Activated T-helper 1 cell treated with anti-CD3 and anti-CD28 coated beads, Interleukin-12 subunit alpha, Interleukin-12 subunit beta, Interleukin-2, Interleukin-4 antibody, amounts not matched to agents 30 ng/mL and 10 ng/mL and 1 ng/mL, durations not matched to agents 14 hours and 24 hours and 36 hours (primary cell): ENCODE measurements at regions of chr7 and their contacts with region 1.

Region 1: DNA sequence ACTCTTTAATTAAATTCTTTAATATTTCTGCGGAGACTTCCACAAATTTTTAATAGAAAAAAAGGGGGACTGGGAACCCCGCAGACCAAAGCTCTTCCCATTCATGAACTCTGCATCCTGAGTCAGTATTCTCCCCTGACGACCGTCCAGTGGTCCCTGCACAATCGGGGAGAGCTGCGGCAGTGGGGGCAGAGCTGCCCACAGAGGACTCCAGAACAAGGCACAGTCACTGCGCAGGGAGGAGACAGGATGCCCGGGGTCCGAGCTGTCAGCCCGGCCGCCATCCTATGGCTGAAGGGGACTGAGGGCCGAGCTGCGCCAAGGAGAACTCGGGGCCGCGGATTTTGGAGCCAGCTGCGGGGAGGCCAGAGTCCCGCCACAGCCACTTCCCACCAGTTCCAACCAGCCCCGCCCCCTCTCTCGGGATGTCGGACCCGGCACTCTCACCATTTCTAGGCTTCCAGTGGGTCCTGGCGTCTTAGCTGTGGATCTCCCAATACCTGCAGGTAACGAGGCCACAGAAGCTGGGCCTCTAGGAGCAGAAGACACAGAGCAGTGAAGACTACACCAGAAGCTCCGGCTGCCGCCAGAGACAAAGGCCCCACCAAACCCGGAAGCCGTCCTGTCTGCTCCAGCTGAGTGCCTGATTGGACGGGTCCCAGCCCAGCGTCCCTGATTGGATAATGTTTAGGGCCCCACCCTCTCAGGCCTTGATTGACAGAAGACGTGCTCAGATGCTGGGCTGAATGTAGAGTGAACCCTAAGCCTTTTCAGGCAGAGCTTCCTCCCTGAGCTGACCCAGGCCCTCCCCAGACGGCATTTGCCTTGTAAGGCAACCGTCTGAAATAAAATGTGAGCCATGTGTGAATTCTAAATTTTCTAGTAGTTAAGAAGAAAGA is at the start of gene ERV3-1:
- DNase-seq: peak; percentile 90
- H3K4me3 Mint-ChIP-seq: peak within 1 kb of the TSS; percentile 97
- H3K27ac Mint-ChIP-seq: peak within 1 kb of the TSS; percentile 91
- H3K4me1 Mint-ChIP-seq: peaks cover 29% of the 10 kb centered on the region
- H3K27me3 Mint-ChIP-seq: no peaks in the 10 kb centered on the region
- total RNA-seq, gene ERV3-1: 6.7 and 8.7 TPM in 2 replicates

Region 2: GRCh38 chr7:64307254-64308015 is 698.9 kb before region 1 on chr7:
- intact Hi-C with region 1: loop called (anchors 1 kb)
- DNase-seq: peak; percentile 91
- H3K4me3 Mint-ChIP-seq: peak overlapping the region; percentile 89
- H3K27ac Mint-ChIP-seq: peak overlapping the region; percentile 88
- H3K4me1 Mint-ChIP-seq: peaks cover 17% of the 10 kb centered on the region
- H3K27me3 Mint-ChIP-seq: no peaks in the 10 kb centered on the region

Region 3: GRCh38 chr7:64562626-64563275 is 443.6 kb before region 1 on chr7 and contains the start of gene ZNF680:
- intact Hi-C with region 1: loop called (anchors 10 kb)
- DNase-seq: peak; percentile 85
- H3K4me3 Mint-ChIP-seq: peak within 1 kb of the TSS; percentile 99
- H3K27ac Mint-ChIP-seq: peak within 1 kb of the TSS; percentile 98
- H3K4me1 Mint-ChIP-seq: peaks cover 18% of the 10 kb centered on the region
- H3K27me3 Mint-ChIP-seq: no peaks in the 10 kb centered on the region
- total RNA-seq, gene ZNF680: 8.5 and 12.2 TPM in 2 replicates

Region 4: DNA sequence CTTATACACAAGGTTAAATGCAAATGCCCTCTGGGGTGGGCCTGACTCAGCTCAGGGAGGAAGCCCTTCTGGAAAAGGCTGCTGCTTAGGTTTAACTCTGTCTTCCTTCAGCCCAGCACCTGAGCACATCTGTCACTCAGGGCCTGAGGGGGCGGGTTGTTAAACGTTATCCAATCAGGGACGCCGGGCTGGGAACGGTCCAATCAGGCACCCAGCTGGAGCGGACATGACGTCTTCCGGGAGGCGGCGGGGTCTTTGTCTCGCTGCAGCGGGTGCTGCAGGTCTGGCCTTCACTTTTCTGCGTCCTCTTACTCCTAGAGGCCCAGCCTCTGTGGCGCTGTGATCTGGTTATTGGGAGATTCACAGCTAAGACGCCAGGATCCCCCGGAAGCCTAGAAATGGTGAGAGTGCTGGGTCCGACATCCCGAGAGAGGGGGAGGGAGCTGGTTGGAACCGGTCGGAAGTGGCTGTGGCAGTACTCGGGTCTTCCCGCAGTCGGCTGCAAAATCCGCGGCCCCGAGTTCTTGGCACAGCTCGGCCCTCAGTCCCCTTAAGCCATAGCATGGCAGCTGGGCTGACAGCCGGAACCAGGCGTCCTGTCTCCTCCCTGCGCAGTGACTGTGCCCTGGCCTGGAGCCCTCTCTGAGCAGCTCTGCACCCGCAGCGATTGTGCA is 212.0 kb before region 1 on chr7 and contains the start of gene ZNF138:
- intact Hi-C with region 1: loop called (anchors 1 kb)
- DNase-seq: peak; percentile 90
- H3K4me3 Mint-ChIP-seq: peak within 1 kb of the TSS; percentile 98
- H3K27ac Mint-ChIP-seq: peak within 1 kb of the TSS; percentile 98
- H3K4me1 Mint-ChIP-seq: peaks cover 21% of the 10 kb centered on the region
- H3K27me3 Mint-ChIP-seq: no peaks in the 10 kb centered on the region
- total RNA-seq, gene ZNF138: 7.7 and 7.9 TPM in 2 replicates

Region 5: DNA sequence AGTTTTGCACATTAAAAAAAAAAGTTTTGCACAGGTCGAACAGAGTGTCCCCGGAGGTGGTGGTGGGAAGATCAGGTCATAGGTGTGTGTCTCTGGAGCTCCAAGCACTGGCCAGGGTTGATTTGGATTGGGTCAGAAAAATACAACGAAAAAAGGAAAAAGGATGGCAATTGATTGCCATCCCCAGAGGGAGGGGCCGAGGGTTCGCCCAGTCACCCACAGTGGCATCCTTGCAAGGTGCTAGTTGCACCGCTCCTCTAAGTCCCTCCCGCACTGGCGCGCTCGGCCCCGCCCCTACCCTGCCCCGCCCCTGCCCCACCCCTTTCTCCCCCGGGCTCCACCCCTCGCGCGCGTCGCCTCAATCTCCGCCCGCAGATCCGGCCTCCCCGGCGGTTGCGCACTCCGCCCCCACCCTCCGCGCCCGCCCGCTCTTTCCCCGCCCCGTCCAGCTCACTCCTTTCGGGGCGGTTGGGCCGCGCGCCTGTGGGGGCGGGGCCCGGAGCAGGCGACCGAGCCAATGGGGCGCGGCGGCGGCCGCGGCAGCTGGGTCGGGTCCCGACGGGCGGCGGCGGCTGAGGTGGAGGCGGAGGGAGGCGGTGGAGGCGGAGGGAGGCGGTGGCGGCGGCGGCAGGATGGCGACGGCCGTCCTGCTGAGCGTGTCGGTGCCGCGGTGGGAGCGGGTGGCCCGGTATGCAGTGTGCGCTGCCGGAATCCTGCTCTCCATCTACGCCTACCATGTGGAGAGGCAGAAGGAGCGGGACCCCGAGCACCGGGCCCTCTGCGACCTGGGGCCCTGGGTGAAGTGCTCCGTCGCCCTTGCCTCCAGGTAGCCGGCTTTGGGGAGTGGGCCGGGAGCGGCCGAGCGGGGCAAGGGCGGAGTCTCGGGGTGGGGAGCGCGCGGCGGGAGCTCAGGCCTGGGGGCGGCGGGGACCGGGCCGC is 31.7 kb after region 1 on chr7:
- intact Hi-C with region 1: loop called (anchors 1 kb)
- DNase-seq: peak; percentile 83
- H3K4me3 Mint-ChIP-seq: peak overlapping the region; percentile 79
- H3K27ac Mint-ChIP-seq: peak overlapping the region; percentile 73
- H3K4me1 Mint-ChIP-seq: peaks cover 16% of the 10 kb centered on the region
- H3K27me3 Mint-ChIP-seq: no peaks in the 10 kb centered on the region